SK-N-SH (cell line): ENCODE measurements at regions of chr13 and their contacts with region 1.

Region 1: DNA sequence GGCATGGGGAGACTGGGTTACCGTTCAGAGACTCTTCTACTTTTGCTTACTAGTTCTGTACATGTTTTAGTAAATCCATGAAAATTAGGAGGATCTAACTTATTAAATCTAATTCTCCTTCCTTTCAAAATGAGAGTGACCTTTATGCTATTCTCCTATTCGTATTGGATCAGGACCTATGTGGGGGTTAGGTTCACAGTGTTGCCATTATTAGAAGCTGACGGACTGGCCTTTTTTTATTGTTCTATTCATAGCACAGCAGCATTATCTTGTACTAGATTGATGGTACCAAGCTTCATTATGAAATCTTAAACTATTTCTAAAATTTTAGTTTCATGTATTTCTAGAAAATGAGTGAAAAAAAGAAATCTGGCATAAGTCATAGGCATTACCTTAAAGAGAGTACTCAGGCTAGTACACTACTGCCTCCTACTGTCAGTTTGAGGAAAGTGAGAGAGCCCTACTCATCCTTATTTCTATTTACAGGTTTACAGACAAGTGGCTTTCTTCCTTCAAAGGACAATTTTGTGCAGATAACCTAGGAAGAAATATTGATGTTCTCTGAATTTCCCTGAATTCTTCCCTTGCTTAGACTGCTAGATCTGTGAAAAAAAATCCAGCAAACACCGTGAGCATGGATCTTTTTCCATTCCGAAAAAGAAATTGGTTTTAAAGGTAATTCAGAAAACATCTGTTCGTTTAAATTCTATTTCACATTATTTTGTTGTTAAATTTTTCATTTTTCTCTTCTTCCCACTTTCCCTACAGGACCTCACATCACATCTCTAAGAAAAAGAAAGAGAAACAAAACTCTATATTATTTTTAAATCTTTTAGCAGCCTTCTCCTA is 485.5 kb downstream of the DIAPH3 start:
- DNase-seq: peak; percentile 55
- H3K4me3 ChIP-seq: no peak overlapping the region; a peak in 1 of 4 replicates
- H3K27ac ChIP-seq: peak overlapping the region in 1 of 2 experiments; percentile 81; a peak in 2 of 4 replicates
- H3K4me1 ChIP-seq: peaks cover 7 to 31% of the 10 kb centered on the region in 2 experiments; a peak in 3 of 4 replicates
- H3K27me3 ChIP-seq: no peaks in the 10 kb centered on the region
- CTCF ChIP-seq: peak; percentile 94
- EP300 ChIP-seq: no peak
- RAD21 ChIP-seq: peak; percentile 95

Region 2: GRCh38 chr13:59666504-59666903 is 11.7 kb before region 1 on chr13:
- CTCF ChIA-PET with region 1: interaction called, 11 read pairs
- POLR2A ChIA-PET with region 1: no interaction called
- DNase-seq: no peak
- H3K4me3 ChIP-seq: no peak overlapping the region
- H3K27ac ChIP-seq: no peak overlapping the region
- H3K4me1 ChIP-seq: peaks cover 3% of the 10 kb centered on the region in 2 experiments; a peak in 3 of 4 replicates
- H3K27me3 ChIP-seq: no peaks in the 10 kb centered on the region
- CTCF ChIP-seq: no peak
- EP300 ChIP-seq: no peak
- RAD21 ChIP-seq: no peak

Region 3: DNA sequence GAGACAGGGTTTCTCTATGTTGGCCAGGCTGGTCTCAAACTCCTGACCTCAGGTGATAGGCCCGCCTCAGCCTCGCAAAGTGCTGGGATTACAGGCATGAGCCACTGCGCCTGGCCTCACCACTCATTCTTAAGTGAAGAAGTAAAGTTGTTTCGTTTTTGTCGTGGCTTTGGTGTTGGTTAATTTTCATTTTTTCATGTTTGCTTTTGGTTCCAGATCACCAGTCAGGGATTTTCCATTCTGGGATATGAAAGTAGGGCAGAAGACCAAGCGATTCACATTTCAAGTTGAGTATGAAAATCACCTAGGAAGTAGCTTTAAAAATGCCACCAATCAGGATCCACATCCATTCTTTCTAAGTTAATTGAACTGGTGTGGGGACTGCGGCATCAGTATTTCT is 195.7 kb after region 1 on chr13:
- CTCF ChIA-PET with region 1: no interaction called
- POLR2A ChIA-PET with region 1: no interaction called
- DNase-seq: no peak
- H3K4me3 ChIP-seq: no peak overlapping the region
- H3K27ac ChIP-seq: no peak overlapping the region
- H3K4me1 ChIP-seq: peaks cover 4 to 5% of the 10 kb centered on the region in 2 experiments; a peak in 3 of 4 replicates
- H3K27me3 ChIP-seq: no peaks in the 10 kb centered on the region
- CTCF ChIP-seq: no peak
- EP300 ChIP-seq: no peak
- RAD21 ChIP-seq: no peak